Aorta (tissue), 5 donors: ENCODE measurements at regions of chr11 and their contacts with region 1.

Region 1: GRCh38 chr11:35485656-35486322 is 39.6 kb downstream of the PAMR1 start:
- DNase-seq: peak; percentile 79 to 90
- ATAC-seq: peak; percentile 89
- H3K4me3 ChIP-seq: no peak overlapping the region
- H3K27ac ChIP-seq: no peak overlapping the region
- H3K4me1 ChIP-seq: peaks cover 0 to 2% of the 10 kb centered on the region in 2 donors
- H3K27me3 ChIP-seq: peaks cover 0 to 6% of the 10 kb centered on the region in 2 donors

Region 2: DNA sequence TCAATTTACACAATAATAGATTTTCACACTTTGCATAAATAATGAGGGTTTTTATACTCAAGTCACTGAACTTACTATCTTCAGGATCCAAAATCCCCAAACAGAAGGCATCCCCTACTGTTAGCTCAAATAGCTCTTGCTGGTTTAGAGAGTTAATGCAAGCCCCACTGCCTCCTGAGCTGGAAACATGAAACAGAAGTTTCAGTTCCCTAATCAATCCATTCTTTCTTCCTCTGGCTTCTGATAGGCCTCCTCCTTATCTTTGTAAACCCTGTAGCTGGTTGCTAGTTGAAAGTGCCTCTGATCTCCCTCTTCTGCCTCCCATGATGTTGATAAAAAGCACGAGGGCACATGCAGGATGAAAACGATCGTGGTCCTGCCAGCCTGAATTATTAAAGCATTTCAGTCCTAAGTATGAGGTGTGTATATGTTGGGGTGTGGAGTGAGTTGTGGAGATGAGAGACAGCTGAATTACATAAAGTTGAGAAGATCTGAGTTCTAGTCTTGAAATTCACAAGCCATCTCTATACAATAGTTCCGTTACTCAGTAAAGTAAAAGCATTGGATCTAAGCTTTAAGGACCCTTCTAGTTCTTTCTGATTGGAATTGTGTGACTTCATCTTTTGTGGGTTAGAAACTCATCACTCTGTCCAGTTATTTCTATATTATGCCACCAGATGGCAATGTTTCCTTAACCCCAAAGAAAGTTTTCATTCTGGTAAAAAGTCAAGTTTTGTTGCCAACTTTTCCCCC is 899.9 kb before region 1 on chr11:
- intact Hi-C with region 1: loop called in 1 of 2 experiments (anchors 5 kb)
- DNase-seq: no peak
- ATAC-seq: peak; percentile 64
- H3K4me3 ChIP-seq: peak overlapping the region in 1 of 2 donors; percentile 32
- H3K27ac ChIP-seq: no peak overlapping the region
- H3K4me1 ChIP-seq: no peaks in the 10 kb centered on the region
- H3K27me3 ChIP-seq: peaks cover 0 to 3% of the 10 kb centered on the region in 2 donors

Region 3: GRCh38 chr11:35404388-35404775 is 81.4 kb before region 1 on chr11:
- intact Hi-C with region 1: loop called in 1 of 2 experiments (anchors 5 kb)
- DNase-seq: peak; percentile 68 to 84
- ATAC-seq: no peak
- H3K4me3 ChIP-seq: no peak overlapping the region
- H3K27ac ChIP-seq: no peak overlapping the region
- H3K4me1 ChIP-seq: no peaks in the 10 kb centered on the region
- H3K27me3 ChIP-seq: no peaks in the 10 kb centered on the region

Region 4: DNA sequence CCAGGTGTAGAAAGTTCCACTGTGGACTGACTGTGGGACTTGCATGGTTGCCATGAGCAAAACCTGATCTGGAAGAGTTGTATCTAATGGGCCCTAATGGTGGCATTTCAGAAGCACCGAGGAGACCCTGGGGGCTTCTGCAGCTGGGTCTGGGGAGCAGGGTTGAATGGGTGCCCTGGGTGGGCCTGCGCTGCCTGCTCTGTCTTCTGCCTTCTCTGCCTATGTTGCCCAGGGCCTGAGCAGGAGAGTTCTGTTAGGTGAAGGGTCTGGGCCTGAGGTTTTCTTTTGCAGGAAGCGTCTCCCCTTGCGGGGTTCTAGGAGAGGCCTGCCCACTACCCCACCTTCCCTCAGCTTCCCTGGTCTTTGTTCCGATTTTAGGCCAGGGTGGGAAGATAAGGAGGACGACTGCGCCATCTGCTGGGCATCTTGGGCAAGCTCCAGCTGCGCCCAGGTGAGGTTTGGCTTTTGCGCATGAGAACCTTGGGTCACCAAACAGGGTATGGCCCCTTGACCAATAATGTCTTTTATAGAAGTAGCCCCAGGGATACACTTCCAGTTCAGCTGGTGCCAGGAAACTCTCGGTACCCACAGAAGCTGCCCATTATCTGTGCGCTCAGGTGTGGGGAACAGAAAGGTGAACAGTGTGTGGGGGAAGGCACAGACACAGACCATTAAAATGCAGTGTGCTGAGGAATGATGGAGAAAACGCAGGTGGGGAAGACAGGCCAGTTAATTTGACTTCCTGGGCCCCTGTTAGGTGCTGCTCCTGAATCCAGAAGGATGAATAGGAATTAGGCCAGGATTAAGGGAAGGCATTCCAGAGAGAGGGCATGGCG is 780.2 kb after region 1 on chr11:
- intact Hi-C with region 1: loop called in 1 of 2 experiments (anchors 10 kb)
- DNase-seq: peak; percentile 58 to 80
- ATAC-seq: peak; percentile 62
- H3K4me3 ChIP-seq: no peak overlapping the region
- H3K27ac ChIP-seq: no peak overlapping the region
- H3K4me1 ChIP-seq: no peaks in the 10 kb centered on the region
- H3K27me3 ChIP-seq: no peaks in the 10 kb centered on the region